GM13976 (cell line): ENCODE measurements at regions of chr4 and their contacts with region 1.

Region 1: GRCh38 chr4:176357359-176358082 is 37.8 kb downstream of the SPCS3 start:
- DNase-seq: peak; percentile 53
- CTCF ChIP-seq: no peak

Region 2: GRCh38 chr4:176789955-176790354 is 432.4 kb after region 1 on chr4:
- in situ Hi-C with region 1: loop called (anchors 25 kb)
- DNase-seq: peak; percentile 60
- CTCF ChIP-seq: peak; percentile 52

Region 3: GRCh38 chr4:177638871-177639270 is 1281.3 kb after region 1 on chr4:
- in situ Hi-C with region 1: no loop called
- DNase-seq: no peak
- CTCF ChIP-seq: no peak